T-cell (primary cell): ENCODE measurements at regions of chr3 and their contacts with region 1.

Region 1: DNA sequence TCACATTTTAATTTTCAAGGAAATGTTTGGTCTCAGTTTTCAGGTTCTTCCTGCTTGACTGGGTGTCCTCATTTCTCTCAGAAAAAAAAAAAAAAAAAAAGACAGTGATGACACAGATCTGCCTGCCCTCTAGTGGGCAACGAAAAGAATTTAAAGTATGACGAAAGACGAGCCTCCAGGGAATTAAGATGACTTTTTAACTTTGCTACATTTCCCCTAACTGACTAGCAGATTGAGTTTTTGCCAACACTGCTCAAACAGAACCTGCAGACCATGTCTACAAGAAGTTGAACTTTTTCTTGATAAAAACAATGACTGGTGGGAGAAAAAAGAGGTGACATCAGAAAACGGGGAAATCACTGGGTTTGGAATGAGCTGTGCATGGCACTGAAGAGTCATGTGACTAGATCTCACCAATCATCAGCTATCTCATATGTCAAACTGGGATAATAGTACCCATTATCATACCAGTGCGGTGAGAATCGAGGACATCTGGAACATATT is 40.8 kb downstream of the EOMES start:
- DNase-seq: peak in 21 of 35 experiments; percentile 3 to 79 (median 25)
- ATAC-seq: peak; percentile 42 to 83 (median 66)
- H3K4me3 ChIP-seq: no peak overlapping the region
- H3K4me3 Mint-ChIP-seq: peak overlapping the region; percentile 8 to 51 (median 14)
- H3K27ac ChIP-seq: no peak overlapping the region
- H3K27ac Mint-ChIP-seq: peak overlapping the region in 1 of 2 donors; percentile 0
- H3K4me1 ChIP-seq: peaks cover 0 to 7% of the 10 kb centered on the region in 2 experiments
- H3K4me1 Mint-ChIP-seq: peaks cover 7 to 16% (median 9%) of the 10 kb centered on the region in 3 donors
- H3K27me3 ChIP-seq: peaks cover 0 to 2% of the 10 kb centered on the region in 2 experiments
- H3K27me3 Mint-ChIP-seq: peaks cover 3% of the 10 kb centered on the region in 2 donors

Region 2: GRCh38 chr3:27134165-27134796 is 547.0 kb before region 1 on chr3:
- CTCF ChIA-PET with region 1: interaction called, 7 to 17 read pairs
- POLR2A ChIA-PET with region 1: no interaction called
- DNase-seq: peak; percentile 13 to 74 (median 41)
- ATAC-seq: peak; percentile 56 to 84 (median 66)
- H3K4me3 ChIP-seq: no peak overlapping the region
- H3K4me3 Mint-ChIP-seq: no peak overlapping the region
- H3K27ac ChIP-seq: no peak overlapping the region
- H3K27ac Mint-ChIP-seq: no peak overlapping the region
- H3K4me1 ChIP-seq: no peaks in the 10 kb centered on the region
- H3K4me1 Mint-ChIP-seq: no peaks in the 10 kb centered on the region
- H3K27me3 ChIP-seq: no peaks in the 10 kb centered on the region
- H3K27me3 Mint-ChIP-seq: peaks cover 4 to 6% of the 10 kb centered on the region in 2 donors

Region 3: GRCh38 chr3:27368831-27369607 is 312.3 kb before region 1 on chr3 and contains the start of gene NEK10:
- CTCF ChIA-PET with region 1: interaction called, 4 to 13 read pairs
- POLR2A ChIA-PET with region 1: no interaction called
- DNase-seq: peak; percentile 78 to 95 (median 91)
- ATAC-seq: peak; percentile 97 to 99 (median 97)
- H3K4me3 ChIP-seq: peak within 1 kb of the TSS; percentile 64 to 66
- H3K4me3 Mint-ChIP-seq: peak within 1 kb of the TSS; percentile 90 to 99 (median 92)
- H3K27ac ChIP-seq: no peak within 1 kb of the TSS
- H3K27ac Mint-ChIP-seq: peak within 1 kb of the TSS; percentile 73 to 76
- H3K4me1 ChIP-seq: peaks cover 3 to 10% of the 10 kb centered on the region in 2 experiments
- H3K4me1 Mint-ChIP-seq: peaks cover 14 to 16% (median 15%) of the 10 kb centered on the region in 3 donors
- H3K27me3 ChIP-seq: no peaks in the 10 kb centered on the region
- H3K27me3 Mint-ChIP-seq: no peaks in the 10 kb centered on the region
- total RNA-seq, gene NEK10: 0.73 to 2.2 (median 1.2) TPM

Region 4: DNA sequence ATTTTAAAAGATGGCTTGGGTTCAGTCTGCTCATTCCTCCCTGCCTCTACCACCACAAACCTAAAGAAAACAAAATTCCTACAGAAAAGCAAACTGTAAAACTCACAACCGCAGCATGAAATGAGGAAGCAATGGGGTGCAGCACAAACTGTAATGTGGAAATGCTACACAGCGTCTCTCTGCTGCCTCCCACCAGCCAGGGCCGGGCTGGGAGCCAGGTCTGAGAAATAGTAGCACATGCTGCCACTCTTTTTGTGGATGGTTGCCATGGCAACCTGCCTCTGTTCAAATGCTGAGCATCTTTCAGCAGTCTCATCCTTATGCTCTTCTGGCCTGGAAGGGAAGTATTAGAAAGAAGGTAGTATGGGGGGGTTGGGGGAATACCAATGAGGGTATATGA is 14.6 kb before region 1 on chr3:
- CTCF ChIA-PET with region 1: interaction called, 6 to 10 read pairs
- POLR2A ChIA-PET with region 1: no interaction called
- DNase-seq: peak in 9 of 35 experiments; percentile 1 to 40 (median 12)
- ATAC-seq: peak in 2 of 4 experiments; percentile 46 to 49
- H3K4me3 ChIP-seq: no peak overlapping the region
- H3K4me3 Mint-ChIP-seq: no peak overlapping the region
- H3K27ac ChIP-seq: no peak overlapping the region
- H3K27ac Mint-ChIP-seq: peak overlapping the region in 1 of 2 donors; percentile 28
- H3K4me1 ChIP-seq: peaks cover 0 to 5% of the 10 kb centered on the region in 2 experiments
- H3K4me1 Mint-ChIP-seq: peaks cover 7 to 10% (median 9%) of the 10 kb centered on the region in 3 donors
- H3K27me3 ChIP-seq: no peaks in the 10 kb centered on the region
- H3K27me3 Mint-ChIP-seq: no peaks in the 10 kb centered on the region

Region 5: DNA sequence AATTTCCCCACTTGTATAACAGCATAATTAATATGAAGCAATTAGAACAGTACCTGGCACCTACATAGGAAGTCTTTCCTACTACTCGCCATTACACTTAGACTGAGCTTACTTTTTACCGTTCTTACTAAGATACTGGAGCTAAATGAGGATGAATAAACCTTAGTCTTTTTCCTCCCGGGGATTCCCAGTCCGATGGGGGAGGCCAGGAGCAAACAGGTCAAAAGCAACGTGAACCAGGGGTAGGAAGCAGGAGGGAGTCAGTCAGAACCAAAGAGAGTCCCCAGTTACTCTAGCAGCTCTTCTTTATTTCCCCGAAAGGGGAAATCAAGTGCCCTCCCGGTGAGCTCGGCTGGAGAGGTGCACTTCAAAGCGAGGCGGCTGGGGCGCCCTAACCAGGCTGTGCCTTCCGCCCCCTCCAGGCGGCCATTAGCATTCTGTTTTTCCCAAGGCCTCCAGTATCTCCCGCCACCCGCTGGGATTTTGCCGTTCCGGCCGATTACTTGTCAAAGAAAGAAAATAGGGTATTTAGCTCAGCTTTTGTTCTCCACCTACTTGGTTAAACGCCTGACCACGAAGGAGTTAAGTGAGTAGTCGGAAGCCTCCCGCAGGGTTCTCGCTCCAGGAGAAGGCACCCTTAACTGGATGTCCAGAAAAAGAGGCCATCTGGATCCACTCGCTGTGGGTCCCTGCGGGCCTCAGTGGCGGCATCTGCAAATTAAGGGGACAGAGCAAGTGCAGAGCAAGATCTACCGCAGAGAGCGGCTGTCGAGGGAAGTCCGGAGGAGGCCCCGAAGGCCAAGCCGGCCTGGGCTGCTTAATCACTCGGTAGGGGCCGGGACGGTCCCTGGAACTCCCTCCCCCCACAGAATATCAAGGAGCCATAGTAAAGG is 47.1 kb after region 1 on chr3:
- CTCF ChIA-PET with region 1: interaction called, 3 to 10 read pairs
- POLR2A ChIA-PET with region 1: no interaction called
- DNase-seq: no peak
- ATAC-seq: peak in 3 of 4 experiments; percentile 38 to 64 (median 46)
- H3K4me3 ChIP-seq: peak overlapping the region in 1 of 2 donors; percentile 7
- H3K4me3 Mint-ChIP-seq: peak overlapping the region; percentile 39 to 74 (median 52)
- H3K27ac ChIP-seq: no peak overlapping the region
- H3K27ac Mint-ChIP-seq: no peak overlapping the region
- H3K4me1 ChIP-seq: peaks cover 19 to 46% of the 10 kb centered on the region in 2 experiments
- H3K4me1 Mint-ChIP-seq: peaks cover 51 to 62% (median 53%) of the 10 kb centered on the region in 3 donors
- H3K27me3 ChIP-seq: peaks cover 45 to 52% of the 10 kb centered on the region in 2 experiments
- H3K27me3 Mint-ChIP-seq: peaks cover 76 to 81% of the 10 kb centered on the region in 2 donors

Region 6: GRCh38 chr3:28399204-28399603 is 717.9 kb after region 1 on chr3:
- CTCF ChIA-PET with region 1: no interaction called
- POLR2A ChIA-PET with region 1: no interaction called
- DNase-seq: no peak
- ATAC-seq: no peak
- H3K4me3 ChIP-seq: no peak overlapping the region
- H3K4me3 Mint-ChIP-seq: no peak overlapping the region
- H3K27ac ChIP-seq: no peak overlapping the region
- H3K27ac Mint-ChIP-seq: no peak overlapping the region
- H3K4me1 ChIP-seq: no peaks in the 10 kb centered on the region
- H3K4me1 Mint-ChIP-seq: no peaks in the 10 kb centered on the region
- H3K27me3 ChIP-seq: no peaks in the 10 kb centered on the region
- H3K27me3 Mint-ChIP-seq: no peaks in the 10 kb centered on the region